ENCODE measurements at regions of chr12 and their contacts with region 1.

Region 1: GRCh38 chr12:89352492-89353187 is at the start of gene DUSP6:
- DNase-seq: peak; percentile 79 to 98 (median 93)
- H3K4me3 ChIP-seq: peak within 1 kb of the TSS; percentile 44 to 93 (median 84)
- H3K27ac ChIP-seq: peak within 1 kb of the TSS; percentile 40 to 98 (median 91)
- H3K27me3 ChIP-seq: peaks cover 0 to 7% (median 0%) of the 10 kb centered on the region in 45 donors
- CTCF ChIP-seq: peak in 1 of 56 donors; percentile 15
- total RNA-seq, gene DUSP6: 8.1 to 87.8 (median 26.2) TPM

Region 2: DNA sequence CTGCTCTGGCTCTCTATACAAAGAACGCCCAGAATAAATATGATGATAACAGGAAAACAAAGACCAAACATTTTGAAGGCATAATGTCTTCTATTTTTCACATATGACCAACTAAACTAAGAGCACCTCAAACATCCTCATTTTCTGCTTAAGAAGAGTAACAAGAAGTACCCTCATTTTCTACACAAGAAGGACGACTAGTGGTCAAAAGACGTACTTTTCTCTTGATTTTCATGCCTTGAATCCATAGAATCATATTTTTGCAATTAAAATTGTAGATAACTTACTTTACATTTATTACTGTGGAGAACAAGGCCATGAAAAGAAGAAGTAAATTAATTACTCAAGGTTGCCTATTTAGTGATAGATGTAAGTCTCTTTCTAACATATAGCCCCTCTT is 359.0 kb before region 1 on chr12:
- intact Hi-C with region 1: no loop called
- DNase-seq: no peak
- H3K4me3 ChIP-seq: no peak overlapping the region
- H3K27ac ChIP-seq: no peak overlapping the region
- H3K27me3 ChIP-seq: no peaks in the 10 kb centered on the region
- CTCF ChIP-seq: peak; percentile 45 to 79 (median 66)

Region 3: DNA sequence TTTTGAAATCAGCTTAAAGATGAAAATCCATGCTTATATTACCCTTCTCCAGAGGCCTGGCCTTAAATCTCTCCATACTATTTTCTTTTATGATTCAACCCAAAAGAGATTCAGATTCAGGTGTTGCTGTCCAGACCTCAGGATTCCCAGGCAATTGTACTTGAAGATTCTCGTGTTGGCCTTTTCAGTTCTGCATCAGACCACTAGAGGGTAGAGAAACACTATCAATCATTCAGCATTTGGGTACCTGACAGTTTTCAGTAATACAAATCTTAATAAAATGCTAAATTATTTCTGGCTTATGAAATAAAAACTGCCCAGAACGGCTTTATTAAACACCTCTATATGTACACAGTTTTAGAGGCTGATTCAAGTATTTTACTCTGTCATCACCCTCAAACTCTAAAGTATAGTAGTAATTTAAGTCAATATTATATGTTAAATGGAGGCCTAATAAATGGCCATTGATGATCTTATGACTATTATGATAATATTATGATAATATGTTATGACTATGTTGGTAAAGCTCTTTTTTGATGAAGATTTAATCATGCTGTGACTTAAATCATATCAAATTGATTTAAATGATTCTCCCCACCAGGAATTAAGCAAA is 301.5 kb before region 1 on chr12:
- intact Hi-C with region 1: loop called in 1 of 2 experiments (anchors 10 kb)
- DNase-seq: no peak
- H3K4me3 ChIP-seq: no peak overlapping the region
- H3K27ac ChIP-seq: no peak overlapping the region
- H3K27me3 ChIP-seq: no peaks in the 10 kb centered on the region
- CTCF ChIP-seq: peak; percentile 80 to 98 (median 91)

Region 4: DNA sequence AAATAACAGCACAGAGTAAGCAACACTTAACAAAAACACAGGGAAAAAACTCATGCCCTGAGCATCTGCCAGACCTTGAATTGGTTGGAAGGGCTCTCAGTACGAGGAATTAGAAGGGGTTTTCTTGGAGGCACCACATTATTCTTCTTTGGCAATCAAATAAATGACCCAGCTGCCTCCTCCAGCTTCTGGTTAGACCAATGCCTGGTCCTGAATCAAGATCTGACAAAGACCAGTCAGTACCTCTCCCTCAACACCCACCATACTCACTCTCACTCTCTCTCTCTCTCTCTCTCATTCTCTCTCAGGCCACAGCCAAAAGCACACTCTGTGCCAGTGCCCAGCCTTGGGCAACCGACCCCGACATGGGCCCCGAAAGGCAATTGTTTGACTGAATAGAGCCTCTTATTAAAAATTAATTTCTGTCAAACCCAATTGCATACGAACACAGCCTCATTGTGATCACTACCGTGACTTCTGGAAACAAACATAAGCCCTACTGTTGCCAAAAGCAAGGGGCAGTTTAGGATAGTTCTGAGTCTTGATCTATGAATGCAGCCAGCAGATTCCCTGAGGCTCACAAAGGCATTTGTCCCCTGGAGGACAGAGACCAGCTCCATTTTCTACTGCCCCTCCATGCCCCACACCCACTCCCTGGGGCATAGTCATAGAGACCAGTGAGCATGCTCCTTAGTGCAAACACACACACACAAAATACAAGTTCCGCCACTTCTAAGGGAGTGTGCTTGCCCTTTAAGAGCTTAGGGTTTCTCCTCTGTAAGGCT is 24.2 kb before region 1 on chr12:
- intact Hi-C with region 1: loop called in 1 of 2 experiments (anchors 2 kb)
- DNase-seq: peak in 1 of 10 donors; percentile 48
- H3K4me3 ChIP-seq: peak overlapping the region in 27 of 59 donors; percentile 0 to 52 (median 24)
- H3K27ac ChIP-seq: peak overlapping the region in 35 of 59 donors; percentile 2 to 75 (median 46)
- H3K27me3 ChIP-seq: no peaks in the 10 kb centered on the region
- CTCF ChIP-seq: no peak